ENCODE measurements at regions of chr19 and their contacts with region 1.

Region 1: DNA sequence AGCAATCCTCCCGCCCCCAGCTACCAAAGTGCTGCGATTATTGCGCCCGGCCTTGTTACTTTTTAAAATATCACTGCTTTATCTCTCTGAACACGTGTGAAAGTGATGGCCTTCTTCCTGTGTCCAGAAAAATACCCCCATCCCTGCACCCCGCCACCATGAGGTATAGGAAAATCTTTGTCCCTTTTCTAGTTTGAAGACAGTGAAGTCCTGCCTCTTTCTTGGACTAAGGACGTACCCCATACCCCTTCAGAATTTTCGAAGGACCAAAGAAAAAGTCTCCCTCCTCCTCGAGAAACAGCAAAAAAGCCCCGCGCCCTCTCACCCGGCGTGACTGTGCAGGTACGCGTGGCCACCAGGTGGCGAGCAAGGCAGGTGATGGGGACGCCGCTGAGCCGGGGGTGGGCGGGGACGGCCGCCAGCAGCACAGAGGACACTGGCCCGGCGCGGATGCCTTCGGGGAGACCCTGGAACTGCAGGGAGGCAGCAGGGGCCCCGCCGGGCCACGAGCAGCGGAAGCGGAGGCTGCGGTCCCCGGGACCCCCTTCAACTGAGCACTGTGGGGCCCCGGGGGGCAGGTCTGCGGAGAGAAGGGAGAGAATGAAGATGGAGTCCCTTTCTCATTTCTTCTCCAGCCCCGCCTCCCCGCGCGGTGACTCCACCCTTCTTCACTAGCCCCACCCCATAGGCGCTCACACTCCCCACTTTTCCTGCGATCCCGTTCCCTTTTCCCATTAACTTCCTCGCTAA is 3.2 kb downstream of the VSIG10L start:
- DNase-seq: peak; percentile 36 to 48
- ATAC-seq: peak; percentile 47 to 54
- H3K4me3 ChIP-seq: peak overlapping the region; percentile 49 to 60 (median 55)
- H3K27ac ChIP-seq: peak overlapping the region in 2 of 4 donors; percentile 39 to 59
- H3K4me1 ChIP-seq: peaks cover 4 to 17% of the 10 kb centered on the region in 2 donors
- H3K27me3 ChIP-seq: peaks cover 0 to 9% (median 0%) of the 10 kb centered on the region in 3 donors
- CTCF ChIP-seq: peak; percentile 45 to 92 (median 85)
- POLR2A ChIP-seq: no peak

Region 2: DNA sequence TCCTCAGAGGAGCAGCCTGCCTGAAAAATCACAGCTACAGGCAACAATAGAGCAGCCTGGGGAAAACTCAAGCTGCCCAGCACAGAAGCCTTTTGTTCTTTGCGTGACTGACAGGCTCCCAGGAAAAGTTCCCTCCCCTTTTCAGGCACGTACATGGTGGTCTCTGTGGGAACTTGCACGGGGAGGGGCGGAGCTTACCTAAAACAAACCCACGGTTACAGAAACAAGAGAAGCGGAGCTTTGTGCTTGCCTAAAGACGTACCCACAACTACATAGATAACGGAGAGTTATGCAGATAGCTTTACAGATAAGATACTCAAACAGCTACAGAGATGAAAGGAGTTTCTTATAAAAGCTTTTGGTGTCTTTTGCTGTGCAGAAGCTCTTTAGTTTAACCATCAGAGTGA is 16.0 kb after region 1 on chr19:
- in situ Hi-C with region 1: no loop called
- intact Hi-C with region 1: no loop called
- DNase-seq: no peak
- ATAC-seq: no peak
- H3K4me3 ChIP-seq: no peak overlapping the region
- H3K27ac ChIP-seq: no peak overlapping the region
- H3K4me1 ChIP-seq: no peaks in the 10 kb centered on the region
- H3K27me3 ChIP-seq: no peaks in the 10 kb centered on the region
- CTCF ChIP-seq: no peak
- POLR2A ChIP-seq: no peak

Region 3: DNA sequence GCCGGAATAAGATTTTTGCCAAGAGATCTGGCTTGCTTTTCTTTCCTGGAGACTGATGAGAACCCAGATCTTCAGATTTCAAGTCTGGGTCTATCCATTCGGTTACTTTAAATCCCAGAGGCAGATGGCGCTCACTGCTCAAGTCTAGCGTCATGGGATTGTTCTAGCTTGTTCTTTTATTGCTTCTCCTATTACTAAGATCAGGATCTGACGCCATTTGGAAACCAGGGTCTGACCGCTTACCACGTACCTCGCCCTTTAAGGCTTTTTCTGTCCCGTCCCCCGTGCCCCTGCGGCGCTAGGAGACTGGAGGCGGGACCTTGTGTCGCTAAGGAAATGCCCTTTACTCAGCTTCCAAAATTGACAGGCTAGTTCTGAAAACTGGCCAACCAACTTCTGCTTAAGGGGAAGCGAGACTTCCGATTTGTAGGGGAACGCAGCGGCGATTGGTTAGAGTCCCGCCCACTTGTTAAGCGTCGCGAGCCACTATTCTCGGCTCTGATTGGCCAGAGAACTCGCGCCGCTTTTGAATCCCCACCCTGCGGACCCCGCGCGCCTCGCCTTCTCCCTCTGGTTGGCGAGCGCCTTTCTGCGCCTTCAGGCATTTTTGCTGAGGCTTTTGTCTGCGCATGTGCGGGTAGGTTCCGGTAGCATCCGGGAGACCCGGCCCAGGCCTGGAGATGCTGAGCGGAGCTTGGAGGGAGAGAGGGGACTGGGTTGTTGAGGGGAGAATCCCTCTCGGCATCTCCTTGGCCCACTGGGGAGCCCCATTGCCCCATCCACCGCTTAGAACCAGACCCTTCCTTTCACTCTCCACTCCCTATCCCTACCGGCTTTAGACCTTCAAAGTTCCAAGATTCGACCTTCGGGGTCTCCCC is 55.5 kb after region 1 on chr19:
- in situ Hi-C with region 1: loop called in 1 of 4 experiments (anchors 5 kb)
- intact Hi-C with region 1: loop called (anchors 1 kb)
- DNase-seq: peak; percentile 90 to 92
- ATAC-seq: peak; percentile 99 to 100
- H3K4me3 ChIP-seq: peak overlapping the region; percentile 28 to 56 (median 52)
- H3K27ac ChIP-seq: peak overlapping the region; percentile 60 to 80 (median 66)
- H3K4me1 ChIP-seq: peaks cover 7 to 9% of the 10 kb centered on the region in 2 donors
- H3K27me3 ChIP-seq: no peaks in the 10 kb centered on the region
- CTCF ChIP-seq: no peak
- POLR2A ChIP-seq: no peak

Region 4: DNA sequence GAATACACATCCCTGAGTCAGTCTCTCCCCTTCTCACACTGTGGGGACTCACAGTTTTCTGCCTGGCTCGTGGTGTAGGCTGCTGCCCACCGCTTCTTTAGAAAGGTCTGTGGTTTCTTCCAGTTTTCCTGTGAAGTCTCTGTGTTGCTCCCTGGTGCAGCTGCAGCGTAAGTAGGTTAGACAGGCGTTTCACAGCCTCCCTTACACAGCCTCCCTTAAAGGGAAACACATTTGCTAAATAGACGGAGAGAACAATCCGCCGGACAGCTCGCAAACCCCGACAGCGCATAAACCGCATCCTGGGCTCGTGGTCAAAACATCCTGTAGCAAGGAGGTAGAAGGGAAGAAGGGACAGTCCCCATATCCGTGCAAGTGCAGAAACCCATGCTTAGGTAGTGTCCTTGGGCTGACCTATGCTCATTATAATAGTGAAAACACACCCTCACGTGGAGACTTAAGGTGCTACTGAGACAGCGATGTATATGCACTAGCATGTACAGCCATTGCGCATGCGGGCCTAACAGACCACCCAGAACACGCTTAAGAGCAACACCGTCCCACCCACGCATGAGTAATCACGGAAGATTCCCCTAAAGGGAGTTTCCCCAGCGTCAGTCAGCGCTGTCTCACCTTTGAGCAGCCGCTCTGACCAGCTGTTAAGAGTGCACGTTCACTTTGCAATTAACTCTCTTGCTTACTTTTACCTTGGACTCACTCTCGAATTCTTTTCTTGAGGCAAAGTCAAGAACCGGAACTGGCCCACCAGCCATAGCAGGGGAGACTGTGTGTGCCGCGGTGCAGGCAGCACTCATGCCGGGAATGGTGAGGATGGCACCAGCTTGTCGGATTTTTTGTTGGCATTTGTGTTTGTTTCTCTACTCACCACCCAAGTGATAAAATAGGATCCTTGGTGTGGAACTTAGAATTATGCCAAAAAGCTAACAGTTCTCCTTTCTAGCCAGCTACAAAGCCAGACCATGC is 103.0 kb after region 1 on chr19:
- in situ Hi-C with region 1: no loop called
- intact Hi-C with region 1: loop called (anchors 1 kb)
- DNase-seq: no peak
- ATAC-seq: no peak
- H3K4me3 ChIP-seq: no peak overlapping the region
- H3K27ac ChIP-seq: no peak overlapping the region
- H3K4me1 ChIP-seq: no peaks in the 10 kb centered on the region
- H3K27me3 ChIP-seq: peaks cover 0 to 6% (median 2%) of the 10 kb centered on the region in 3 donors
- CTCF ChIP-seq: no peak
- POLR2A ChIP-seq: no peak